ENCODE measurements at regions of chr7 and their contacts with region 1.

Region 1: DNA sequence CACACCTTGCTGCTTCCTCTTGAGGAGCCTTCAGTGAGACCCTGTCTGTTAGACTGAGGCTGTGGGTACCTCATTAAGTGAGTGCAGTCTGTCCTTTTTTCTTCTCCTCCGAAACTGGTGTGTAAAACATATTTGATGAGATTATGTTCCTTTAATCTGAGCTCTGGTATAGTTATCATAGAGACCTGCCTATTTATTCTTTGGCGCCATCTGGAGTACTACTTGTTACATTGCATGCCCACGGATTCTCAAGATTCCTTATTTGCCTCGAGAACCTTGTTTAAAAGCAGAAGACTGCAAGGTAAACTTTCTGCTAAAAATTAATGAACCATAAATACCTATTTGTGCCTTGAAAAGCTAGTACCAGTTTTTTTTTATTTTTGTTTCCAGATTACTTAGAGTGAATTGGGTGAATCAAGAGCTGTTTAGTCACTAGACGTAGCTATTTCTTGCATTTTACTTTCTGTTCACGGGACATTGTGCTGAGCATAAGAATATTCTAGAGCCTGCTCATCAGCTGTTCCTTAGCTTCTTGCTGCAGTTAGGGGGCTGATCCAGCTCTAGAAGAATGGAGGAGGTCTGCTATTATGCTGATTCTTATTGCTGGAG is 16.9 kb upstream of the STMP1 start:
- DNase-seq: no peak
- H3K4me3 Mint-ChIP-seq: no peak overlapping the region
- H3K27ac Mint-ChIP-seq: no peak overlapping the region
- H3K4me1 Mint-ChIP-seq: no peaks in the 10 kb centered on the region
- H3K27me3 Mint-ChIP-seq: no peaks in the 10 kb centered on the region

Region 2: GRCh38 chr7:135274495-135275268 is 370.7 kb before region 1 on chr7:
- CTCF ChIA-PET with region 1: interaction called, 48 read pairs
- POLR2A ChIA-PET with region 1: no interaction called
- DNase-seq: peak; percentile 75
- H3K4me3 Mint-ChIP-seq: no peak overlapping the region
- H3K27ac Mint-ChIP-seq: no peak overlapping the region
- H3K4me1 Mint-ChIP-seq: no peaks in the 10 kb centered on the region
- H3K27me3 Mint-ChIP-seq: peaks cover 5% of the 10 kb centered on the region

Region 3: GRCh38 chr7:135281363-135281949 is 363.9 kb before region 1 on chr7:
- CTCF ChIA-PET with region 1: interaction called, 48 read pairs
- POLR2A ChIA-PET with region 1: no interaction called
- DNase-seq: peak; percentile 83
- H3K4me3 Mint-ChIP-seq: no peak overlapping the region
- H3K27ac Mint-ChIP-seq: no peak overlapping the region
- H3K4me1 Mint-ChIP-seq: peaks cover 25% of the 10 kb centered on the region
- H3K27me3 Mint-ChIP-seq: peaks cover 17% of the 10 kb centered on the region

Region 4: DNA sequence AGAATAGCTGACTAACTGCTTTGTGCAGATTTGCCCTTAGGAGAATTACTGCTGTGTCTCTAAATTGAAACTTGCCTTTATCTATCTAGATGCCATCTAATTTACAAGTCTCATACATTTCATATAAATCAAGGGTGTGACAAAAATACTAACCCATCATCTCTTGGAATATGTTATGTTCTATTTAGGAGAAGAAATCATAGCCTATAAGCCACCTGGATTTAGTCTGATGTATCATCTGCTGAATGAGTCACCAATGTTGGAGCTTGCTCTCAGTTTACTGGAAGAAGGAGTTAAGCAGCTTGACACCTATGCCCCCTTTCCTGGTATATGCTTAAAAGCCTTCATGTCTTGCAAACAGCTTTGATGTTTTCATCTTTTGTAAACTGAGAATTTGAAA is 44.2 kb before region 1 on chr7:
- CTCF ChIA-PET with region 1: no interaction called
- POLR2A ChIA-PET with region 1: no interaction called
- DNase-seq: no peak
- H3K4me3 Mint-ChIP-seq: no peak overlapping the region
- H3K27ac Mint-ChIP-seq: no peak overlapping the region
- H3K4me1 Mint-ChIP-seq: no peaks in the 10 kb centered on the region
- H3K27me3 Mint-ChIP-seq: no peaks in the 10 kb centered on the region

Region 5: GRCh38 chr7:135616136-135616535 is 29.3 kb before region 1 on chr7:
- CTCF ChIA-PET with region 1: interaction called, 21 read pairs
- POLR2A ChIA-PET with region 1: no interaction called
- DNase-seq: no peak
- H3K4me3 Mint-ChIP-seq: no peak overlapping the region
- H3K27ac Mint-ChIP-seq: no peak overlapping the region
- H3K4me1 Mint-ChIP-seq: no peaks in the 10 kb centered on the region
- H3K27me3 Mint-ChIP-seq: no peaks in the 10 kb centered on the region

Region 6: GRCh38 chr7:135620980-135621850 is 24.2 kb before region 1 on chr7:
- CTCF ChIA-PET with region 1: interaction called, 29 read pairs
- POLR2A ChIA-PET with region 1: no interaction called
- DNase-seq: no peak
- H3K4me3 Mint-ChIP-seq: no peak overlapping the region
- H3K27ac Mint-ChIP-seq: no peak overlapping the region
- H3K4me1 Mint-ChIP-seq: peaks cover 3% of the 10 kb centered on the region
- H3K27me3 Mint-ChIP-seq: no peaks in the 10 kb centered on the region

Region 7: DNA sequence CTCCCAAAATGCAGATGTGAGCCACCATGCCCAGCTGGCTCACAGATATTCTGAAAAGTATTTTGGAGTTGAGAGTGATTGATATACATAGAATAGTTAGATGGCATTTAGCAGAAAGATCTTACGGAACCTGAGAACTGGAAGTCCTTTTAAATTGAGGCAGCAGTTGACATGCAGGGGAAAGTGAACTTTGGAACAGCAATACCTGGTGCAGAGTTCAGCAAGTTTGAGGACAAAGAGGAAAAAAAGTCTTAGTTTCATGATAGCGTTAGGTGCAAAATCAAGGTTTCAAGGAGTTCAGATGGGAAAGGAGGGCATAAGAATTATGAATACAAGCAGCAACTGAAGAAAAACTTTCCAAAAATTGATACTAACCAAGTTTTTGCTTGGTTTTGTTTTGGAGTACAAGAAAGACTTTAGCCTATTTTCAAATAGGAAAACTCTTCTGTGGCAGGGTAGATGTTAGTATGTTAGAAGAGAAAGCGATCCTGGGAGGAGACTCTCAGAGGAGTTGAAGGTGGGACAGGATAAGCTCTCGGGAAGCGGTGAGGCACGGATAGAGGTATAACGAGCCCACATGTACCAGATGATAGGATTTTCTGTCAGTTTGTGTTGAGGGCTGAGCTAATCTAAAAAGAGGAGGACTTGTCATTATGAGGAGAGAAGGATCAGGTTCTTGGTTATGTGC is 11.1 kb before region 1 on chr7:
- CTCF ChIA-PET with region 1: interaction called, 19 read pairs
- POLR2A ChIA-PET with region 1: interaction called, 5 read pairs
- DNase-seq: no peak
- H3K4me3 Mint-ChIP-seq: no peak overlapping the region
- H3K27ac Mint-ChIP-seq: no peak overlapping the region
- H3K4me1 Mint-ChIP-seq: no peaks in the 10 kb centered on the region
- H3K27me3 Mint-ChIP-seq: no peaks in the 10 kb centered on the region

Region 8: DNA sequence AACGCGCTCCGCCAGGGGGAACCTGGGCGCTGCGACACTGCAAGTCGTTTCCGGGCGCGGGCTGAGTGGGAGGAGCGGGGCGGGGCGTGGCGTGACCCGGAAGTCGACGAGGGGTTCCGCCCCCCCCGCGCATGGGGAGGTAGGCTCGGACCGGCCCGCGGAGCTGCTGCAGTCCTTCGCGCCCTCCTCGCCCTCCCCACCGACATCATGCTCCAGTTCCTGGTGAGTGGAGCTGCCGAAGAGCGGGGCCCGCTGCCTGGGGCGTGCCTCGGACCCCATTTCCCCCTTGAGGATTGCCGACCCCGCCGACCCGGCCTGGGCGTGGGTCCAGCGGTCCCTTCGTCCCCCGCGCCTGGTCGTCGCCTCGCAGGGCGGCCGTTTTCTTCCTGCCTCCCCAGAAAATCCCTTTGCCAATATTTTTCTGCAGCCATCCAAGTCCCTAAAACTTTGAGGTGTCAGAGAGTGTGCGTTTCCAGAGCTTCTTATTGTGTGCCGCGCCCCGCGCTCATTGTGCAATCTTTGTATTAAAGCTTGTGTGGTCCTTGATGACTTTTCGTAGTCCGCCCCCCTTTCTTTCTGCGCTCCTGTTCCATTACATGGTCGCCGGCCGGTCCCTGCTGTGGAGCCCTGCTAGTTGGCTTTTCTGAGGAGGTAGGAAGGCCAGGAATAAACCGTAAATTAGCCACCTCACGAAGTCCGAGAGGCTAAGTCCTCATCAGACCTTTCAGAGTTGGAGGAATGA is 17.1 kb after region 1 on chr7 and contains the start of gene STMP1:
- CTCF ChIA-PET with region 1: interaction called, 29 read pairs
- POLR2A ChIA-PET with region 1: interaction called, 4 read pairs
- DNase-seq: peak; percentile 96
- H3K4me3 Mint-ChIP-seq: peak within 1 kb of the TSS; percentile 85
- H3K27ac Mint-ChIP-seq: peak within 1 kb of the TSS; percentile 69
- H3K4me1 Mint-ChIP-seq: peaks cover 37% of the 10 kb centered on the region
- H3K27me3 Mint-ChIP-seq: no peaks in the 10 kb centered on the region
- total RNA-seq, gene STMP1: 19.7 to 20.5 TPM

Region 9: GRCh38 chr7:135914346-135914745 is 268.9 kb after region 1 on chr7:
- CTCF ChIA-PET with region 1: no interaction called
- POLR2A ChIA-PET with region 1: no interaction called
- DNase-seq: no peak
- H3K4me3 Mint-ChIP-seq: no peak overlapping the region
- H3K27ac Mint-ChIP-seq: no peak overlapping the region
- H3K4me1 Mint-ChIP-seq: no peaks in the 10 kb centered on the region
- H3K27me3 Mint-ChIP-seq: no peaks in the 10 kb centered on the region

Measured in activated CD4-positive, alpha-beta memory T cell treated with anti-CD3 and anti-CD28 coated beads, Interleukin-2, amount 10 ng/mL, durations not matched to agents 7 days and 5 days (primary cell).